ENCODE measurements at regions of chr12 and their contacts with region 1.

Region 1: DNA sequence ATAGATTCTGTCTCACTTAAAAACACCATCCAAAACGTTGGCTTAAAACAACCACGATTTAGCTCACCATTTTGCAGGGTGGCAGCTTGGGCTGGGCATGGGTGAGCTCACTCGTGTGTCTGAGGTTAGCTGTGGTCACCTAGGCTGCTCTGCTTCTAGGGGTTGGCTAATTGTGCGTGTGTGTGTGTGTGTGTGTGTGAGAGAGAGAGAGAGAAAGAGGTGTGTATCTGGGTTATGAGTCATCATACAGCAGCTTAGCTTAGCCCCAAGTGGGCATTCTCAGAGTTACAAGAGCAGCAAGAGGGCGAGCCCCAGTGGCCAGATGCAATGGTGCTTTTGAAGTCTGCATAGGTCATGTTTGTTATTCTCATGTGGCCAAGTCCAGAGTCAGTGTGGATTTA is 6.0 kb downstream of the FBXW8 start:
- DNase-seq: peak; percentile 65 to 83 (median 71)
- ATAC-seq: peak; percentile 80
- H3K4me3 ChIP-seq: no peak overlapping the region
- H3K27ac ChIP-seq: peak overlapping the region; percentile 34; the same call in 1 of the 3 replicates
- H3K4me1 ChIP-seq: peaks cover 19 to 48% of the 10 kb centered on the region in 2 experiments
- H3K27me3 ChIP-seq: no peaks in the 10 kb centered on the region
- CTCF ChIP-seq: peak; percentile 56 to 76 (median 62)
- EP300 ChIP-seq: peak; percentile 4; the same call in 1 of the 2 replicates
- POLR2A ChIP-seq: no peak
- RAD21 ChIP-seq: peak; percentile 49 to 75

Region 2: GRCh38 chr12:116818948-116819832 is 97.5 kb before region 1 on chr12:
- CTCF ChIA-PET with region 1: no interaction called
- POLR2A ChIA-PET with region 1: no interaction called
- in situ Hi-C with region 1: no loop called
- intact Hi-C with region 1: loop called (anchors 2 kb)
- DNase-seq: peak; percentile 93 to 99 (median 98)
- ATAC-seq: peak; percentile 95
- H3K4me3 ChIP-seq: peak overlapping the region; percentile 77
- H3K27ac ChIP-seq: peak overlapping the region; percentile 96
- H3K4me1 ChIP-seq: peaks cover 6 to 10% of the 10 kb centered on the region in 2 experiments; a peak in 4 of 5 replicates
- H3K27me3 ChIP-seq: no peaks in the 10 kb centered on the region
- CTCF ChIP-seq: no peak
- EP300 ChIP-seq: peak; percentile 30; the same call in 1 of the 2 replicates
- POLR2A ChIP-seq: peak; percentile 85
- RAD21 ChIP-seq: no peak

Region 3: DNA sequence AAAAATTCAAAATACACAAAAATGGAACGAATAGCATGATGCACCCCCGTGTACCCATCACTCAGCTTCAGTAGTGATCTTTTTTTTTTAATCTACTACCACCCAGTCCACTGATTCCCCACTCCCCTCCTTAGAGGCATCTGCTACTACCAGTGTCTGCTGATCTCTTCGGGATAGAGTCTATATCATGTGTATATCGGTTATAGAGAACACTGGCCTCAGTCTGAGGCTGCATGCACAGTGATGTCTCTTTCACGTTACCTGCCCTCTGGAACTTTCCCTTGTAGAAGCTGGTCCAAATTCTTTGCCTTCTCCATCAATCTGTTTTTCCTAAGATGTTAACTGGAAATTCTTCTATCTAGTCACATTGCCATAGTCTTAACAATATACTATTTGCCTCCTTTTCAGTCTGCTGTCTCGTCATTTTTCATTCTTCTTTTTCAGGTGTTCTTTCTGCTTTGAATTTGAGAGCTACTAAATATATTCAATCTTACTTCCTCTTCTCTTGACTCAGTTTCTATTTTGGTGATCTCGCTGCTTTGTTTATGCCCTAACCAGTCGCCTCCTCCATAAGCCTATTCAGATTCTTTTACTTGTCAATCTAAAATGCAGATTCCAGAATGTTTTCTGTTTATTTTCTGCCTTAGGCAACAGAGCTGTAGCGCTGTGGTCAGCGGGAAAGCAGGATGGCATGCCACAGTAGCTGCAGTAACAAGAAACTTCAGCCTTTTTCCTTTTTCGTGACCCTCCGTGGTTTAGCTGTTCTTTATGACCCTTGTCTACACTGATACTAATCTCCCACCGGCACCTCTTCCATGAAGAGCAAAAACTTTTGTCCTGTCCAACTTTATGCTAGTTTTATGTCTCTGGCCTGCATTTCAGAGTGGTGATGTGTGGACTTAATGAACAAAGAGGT is 61.0 kb after region 1 on chr12:
- CTCF ChIA-PET with region 1: no interaction called
- POLR2A ChIA-PET with region 1: no interaction called
- in situ Hi-C with region 1: no loop called
- intact Hi-C with region 1: no loop called
- DNase-seq: no peak
- ATAC-seq: no peak
- H3K4me3 ChIP-seq: no peak overlapping the region
- H3K27ac ChIP-seq: no peak overlapping the region
- H3K4me1 ChIP-seq: peaks cover 0 to 9% of the 10 kb centered on the region in 2 experiments; a peak in 2 of 5 replicates
- H3K27me3 ChIP-seq: no peaks in the 10 kb centered on the region
- CTCF ChIP-seq: no peak
- EP300 ChIP-seq: no peak
- POLR2A ChIP-seq: no peak
- RAD21 ChIP-seq: no peak

Measured in K562 (cell line).